Cardiac septum (tissue), 1 donor: ENCODE measurements at regions of chr2 and their contacts with region 1.

Region 1: GRCh38 chr2:32772638-32773447 is 145.0 kb downstream of the TTC27 start:
- DNase-seq: no peak

Region 2: GRCh38 chr2:32627814-32628579 is 144.8 kb before region 1 on chr2 and contains the start of gene TTC27:
- intact Hi-C with region 1: loop called (anchors 10 kb)
- DNase-seq: peak; percentile 98
- total RNA-seq, gene TTC27: 13.7 TPM

Region 3: GRCh38 chr2:32946314-32947075 is 173.7 kb after region 1 on chr2 and contains the start of gene LTBP1:
- intact Hi-C with region 1: loop called (anchors 1 kb)
- DNase-seq: peak; percentile 94
- total RNA-seq, gene LTBP1: 124 TPM

Region 4: GRCh38 chr2:33033606-33034081 is 260.8 kb after region 1 on chr2:
- intact Hi-C with region 1: loop called (anchors 2 kb)
- DNase-seq: no peak

Region 5: GRCh38 chr2:33134086-33134771 is 361.4 kb after region 1 on chr2:
- intact Hi-C with region 1: loop called (anchors 10 kb)
- DNase-seq: no peak

Region 6: GRCh38 chr2:33267756-33268155 is 494.9 kb after region 1 on chr2:
- intact Hi-C with region 1: loop called (anchors 5 kb)
- DNase-seq: no peak

Region 7: DNA sequence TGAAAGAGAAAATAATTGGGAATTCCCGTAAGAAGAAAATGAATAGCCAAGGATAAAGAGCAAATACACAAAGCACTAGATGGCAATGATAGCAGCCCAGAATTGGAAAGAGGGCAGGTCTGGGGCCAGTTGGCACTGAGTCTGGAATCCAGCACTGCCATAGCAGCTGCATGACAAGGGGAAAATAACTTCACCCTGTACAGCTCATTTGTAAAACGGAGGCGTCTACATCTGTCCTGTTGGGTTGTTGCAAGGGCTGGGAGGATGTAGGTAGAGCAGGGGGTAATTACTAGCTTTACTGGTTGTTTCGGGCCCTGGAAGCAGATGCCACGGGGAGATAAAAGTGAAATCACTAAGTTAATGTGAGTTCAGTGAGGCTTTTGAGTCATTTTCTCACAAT is 593.6 kb after region 1 on chr2:
- intact Hi-C with region 1: loop called (anchors 10 kb)
- DNase-seq: no peak